Heart left ventricle (tissue), 16 donors: ENCODE measurements at regions of chr20 and their contacts with region 1.

Region 1: DNA sequence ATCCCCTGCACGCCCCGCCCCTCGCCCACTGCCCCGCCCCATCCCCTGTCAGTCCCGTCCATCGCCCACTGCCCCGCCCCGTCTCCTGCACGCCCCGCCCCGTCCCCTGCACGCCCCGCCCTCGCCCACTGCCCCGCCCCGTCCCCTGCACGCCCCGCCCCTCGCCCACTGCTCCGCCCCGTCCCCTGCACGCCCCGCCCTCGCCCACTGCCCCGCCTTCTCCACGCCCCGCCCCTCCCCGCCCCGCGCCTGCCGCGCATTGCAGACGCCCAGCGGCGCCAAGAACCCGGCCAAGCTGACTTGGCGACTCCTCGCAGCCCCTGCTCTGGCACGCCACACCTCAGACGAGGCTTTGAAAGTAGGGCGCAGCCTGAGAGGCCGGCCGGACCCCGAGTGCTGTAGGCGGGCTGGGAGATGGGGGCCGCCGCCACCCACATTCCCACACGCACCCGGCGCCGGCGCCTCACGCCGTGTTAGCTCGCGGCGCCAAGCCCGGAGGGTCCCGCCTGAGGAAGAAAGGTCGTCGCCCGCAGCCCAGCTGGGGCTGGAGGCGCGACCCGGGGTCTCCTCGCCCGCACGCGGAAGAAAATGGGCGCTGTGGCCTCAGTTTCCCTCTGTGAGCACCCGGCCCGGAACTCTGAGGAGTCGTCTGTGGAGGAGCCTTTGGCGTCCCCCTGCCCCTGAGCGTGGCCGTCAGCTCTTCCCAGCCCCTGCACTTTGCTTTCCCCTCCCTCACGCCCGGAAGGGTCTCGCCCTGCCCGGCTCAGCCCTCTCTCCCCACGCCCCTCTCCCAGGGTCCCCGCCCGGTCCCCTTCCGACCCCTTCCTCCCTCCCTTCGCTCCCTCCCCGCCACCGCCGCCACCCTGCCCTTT is at the start of gene RAD21L1:
- DNase-seq: peak; percentile 68 to 92 (median 83)
- ATAC-seq: peak; percentile 80 to 96 (median 94)
- H3K4me3 ChIP-seq: peak within 1 kb of the TSS; percentile 55 to 90 (median 68)
- H3K27ac ChIP-seq: peak within 1 kb of the TSS in 3 of 12 donors; percentile 29 to 42 (median 30)
- H3K4me1 ChIP-seq: peaks cover 0 to 20% (median 11%) of the 10 kb centered on the region in 12 donors
- H3K27me3 ChIP-seq: peaks cover 0 to 46% (median 20%) of the 10 kb centered on the region in 9 donors
- CTCF ChIP-seq: no peak
- POLR2A ChIP-seq: no peak
- total RNA-seq, gene RAD21L1: not detected

Region 2: GRCh38 chr20:1122388-1123315 is 103.4 kb before region 1 on chr20:
- intact Hi-C with region 1: no loop called
- DNase-seq: peak in 4 of 5 donors; percentile 36 to 55 (median 48)
- ATAC-seq: peak in 3 of 4 donors; percentile 3 to 29 (median 15)
- H3K4me3 ChIP-seq: peak overlapping the region in 6 of 12 donors; percentile 2 to 23 (median 6)
- H3K27ac ChIP-seq: peak overlapping the region in 10 of 12 donors; percentile 26 to 82 (median 50)
- H3K4me1 ChIP-seq: peaks cover 16 to 78% (median 51%) of the 10 kb centered on the region in 12 donors
- H3K27me3 ChIP-seq: no peaks in the 10 kb centered on the region
- CTCF ChIP-seq: no peak
- POLR2A ChIP-seq: no peak

Region 3: DNA sequence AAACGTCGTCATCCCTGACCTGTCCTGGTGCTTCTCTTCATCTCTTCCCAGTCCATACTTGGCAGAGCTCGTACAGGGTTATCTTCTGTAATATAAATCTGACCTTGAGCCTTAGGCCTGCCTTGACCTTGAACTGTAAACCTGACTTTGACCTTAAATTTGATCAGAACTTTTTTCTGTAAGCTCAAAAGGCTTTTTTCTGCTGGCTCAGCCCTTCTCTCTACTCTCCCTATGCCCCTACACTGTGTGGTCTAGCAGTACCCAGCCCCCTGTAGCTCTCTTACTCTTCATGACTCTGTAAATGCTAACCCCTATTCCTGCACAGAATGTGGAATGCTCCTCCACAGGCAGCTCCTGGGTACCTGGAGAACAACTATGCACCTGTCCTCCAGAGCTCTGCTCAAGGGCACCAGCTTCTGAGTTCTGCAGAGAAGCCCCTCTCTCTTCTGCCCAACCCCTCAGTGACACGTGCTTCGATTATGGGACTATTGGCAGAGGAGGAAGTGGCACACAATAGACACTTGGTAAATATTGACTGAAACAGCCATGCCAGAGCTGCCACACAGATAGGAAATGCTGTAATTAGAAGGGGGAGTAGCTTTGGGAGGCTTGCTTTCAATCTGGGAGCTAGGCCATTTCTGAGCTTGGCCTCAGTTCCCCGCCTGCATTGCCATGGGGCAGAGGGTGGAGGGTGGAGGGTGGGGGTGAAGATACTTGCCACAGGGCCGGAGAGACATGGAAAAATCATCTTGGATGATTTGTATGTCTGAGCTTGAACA is 55.4 kb after region 1 on chr20:
- intact Hi-C with region 1: loop called in 1 of 10 experiments (anchors 10 kb)
- DNase-seq: no peak
- ATAC-seq: peak; percentile 45 to 82 (median 64)
- H3K4me3 ChIP-seq: no peak overlapping the region
- H3K27ac ChIP-seq: peak overlapping the region in 10 of 12 donors; percentile 2 to 52 (median 40)
- H3K4me1 ChIP-seq: peaks cover 0 to 16% (median 7%) of the 10 kb centered on the region in 12 donors
- H3K27me3 ChIP-seq: no peaks in the 10 kb centered on the region
- CTCF ChIP-seq: no peak
- POLR2A ChIP-seq: no peak

Region 4: GRCh38 chr20:1631309-1632151 is 405.5 kb after region 1 on chr20:
- intact Hi-C with region 1: no loop called
- DNase-seq: no peak
- ATAC-seq: no peak
- H3K4me3 ChIP-seq: no peak overlapping the region
- H3K27ac ChIP-seq: no peak overlapping the region
- H3K4me1 ChIP-seq: peaks cover 0 to 10% (median 0%) of the 10 kb centered on the region in 12 donors
- H3K27me3 ChIP-seq: peaks cover 0 to 17% (median 0%) of the 10 kb centered on the region in 9 donors
- CTCF ChIP-seq: no peak
- POLR2A ChIP-seq: no peak